B cell (primary cell): ENCODE measurements at regions of chr7 and their contacts with region 1.

Region 1: GRCh38 chr7:74206589-74207120 is 3.2 kb upstream of the LAT2 start:
- DNase-seq: peak; percentile 89
- ATAC-seq: peak; percentile 52
- H3K4me3 ChIP-seq: peak overlapping the region in 3 of 5 experiments; percentile 43 to 57 (median 46)
- H3K4me3 Mint-ChIP-seq: peak overlapping the region; percentile 74
- H3K27ac ChIP-seq: no peak overlapping the region
- H3K27ac Mint-ChIP-seq: no peak overlapping the region
- H3K4me1 ChIP-seq: peaks cover 27 to 48% of the 10 kb centered on the region in 2 donors
- H3K4me1 Mint-ChIP-seq: peaks cover 54% of the 10 kb centered on the region
- H3K27me3 ChIP-seq: no peaks in the 10 kb centered on the region
- H3K27me3 Mint-ChIP-seq: no peaks in the 10 kb centered on the region
- CTCF ChIP-seq: peak; percentile 98

Region 2: DNA sequence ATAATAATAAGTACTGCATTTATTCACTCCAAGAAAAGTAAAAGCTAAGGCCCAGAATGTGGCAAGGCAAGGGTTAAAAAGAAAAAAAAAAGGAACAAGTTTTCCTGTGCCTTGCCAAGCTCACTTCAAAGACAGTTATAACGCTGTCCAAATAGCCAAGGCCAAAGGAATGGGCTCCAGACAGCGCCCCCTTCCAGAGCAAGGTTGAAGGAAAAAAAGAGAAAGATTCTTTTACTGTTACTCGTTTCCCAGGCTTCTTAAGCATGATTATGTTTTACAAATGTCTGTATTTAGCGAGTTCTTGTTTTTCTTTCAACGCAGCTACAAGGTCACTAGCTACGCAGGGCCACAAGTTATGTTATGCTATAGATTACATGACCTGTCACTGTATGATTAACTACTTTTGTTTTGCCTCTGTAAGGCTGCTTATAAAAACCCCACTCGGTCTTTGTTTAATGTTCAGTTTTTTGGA is 41.6 kb before region 1 on chr7:
- CTCF ChIA-PET with region 1: no interaction called
- POLR2A ChIA-PET with region 1: no interaction called
- intact Hi-C with region 1: no loop called
- DNase-seq: no peak
- ATAC-seq: no peak
- H3K4me3 ChIP-seq: no peak overlapping the region
- H3K4me3 Mint-ChIP-seq: no peak overlapping the region
- H3K27ac ChIP-seq: no peak overlapping the region
- H3K27ac Mint-ChIP-seq: no peak overlapping the region
- H3K4me1 ChIP-seq: no peaks in the 10 kb centered on the region
- H3K4me1 Mint-ChIP-seq: no peaks in the 10 kb centered on the region
- H3K27me3 ChIP-seq: no peaks in the 10 kb centered on the region
- H3K27me3 Mint-ChIP-seq: no peaks in the 10 kb centered on the region
- CTCF ChIP-seq: no peak

Region 3: GRCh38 chr7:74191231-74191630 is 15.4 kb before region 1 on chr7:
- CTCF ChIA-PET with region 1: interaction called, 11 read pairs
- POLR2A ChIA-PET with region 1: no interaction called
- intact Hi-C with region 1: no loop called
- DNase-seq: no peak
- ATAC-seq: no peak
- H3K4me3 ChIP-seq: no peak overlapping the region
- H3K4me3 Mint-ChIP-seq: no peak overlapping the region
- H3K27ac ChIP-seq: no peak overlapping the region
- H3K27ac Mint-ChIP-seq: no peak overlapping the region
- H3K4me1 ChIP-seq: peaks cover under 1 to 6% of the 10 kb centered on the region in 2 donors
- H3K4me1 Mint-ChIP-seq: peaks cover 14% of the 10 kb centered on the region
- H3K27me3 ChIP-seq: no peaks in the 10 kb centered on the region
- H3K27me3 Mint-ChIP-seq: no peaks in the 10 kb centered on the region
- CTCF ChIP-seq: no peak

Region 4: DNA sequence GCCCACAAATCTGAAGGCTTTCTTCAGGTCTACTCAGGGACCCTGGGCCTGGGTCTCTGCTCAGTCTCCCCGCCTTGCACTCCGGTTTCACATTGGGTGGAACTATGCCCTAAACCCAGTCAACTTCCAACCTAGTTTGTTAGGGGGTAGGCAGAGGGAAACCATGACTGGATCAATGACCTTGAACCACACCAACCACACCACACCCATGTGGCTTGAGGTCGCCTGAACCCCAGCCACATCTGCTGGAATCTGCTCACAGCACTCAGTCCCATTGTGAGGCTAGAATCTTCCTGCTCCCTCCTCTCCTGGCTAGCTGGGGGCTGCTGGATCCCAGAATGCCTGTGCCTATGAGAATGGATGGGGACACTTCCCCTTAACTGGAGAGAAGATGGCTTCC is 29.6 kb after region 1 on chr7:
- CTCF ChIA-PET with region 1: interaction called, 55 read pairs
- POLR2A ChIA-PET with region 1: interaction called, 11 read pairs
- intact Hi-C with region 1: loop called (anchors 5 kb)
- DNase-seq: no peak
- ATAC-seq: no peak
- H3K4me3 ChIP-seq: no peak overlapping the region
- H3K4me3 Mint-ChIP-seq: no peak overlapping the region
- H3K27ac ChIP-seq: no peak overlapping the region
- H3K27ac Mint-ChIP-seq: peak overlapping the region; percentile 41
- H3K4me1 ChIP-seq: peaks cover 37 to 57% of the 10 kb centered on the region in 2 donors
- H3K4me1 Mint-ChIP-seq: peaks cover 37% of the 10 kb centered on the region
- H3K27me3 ChIP-seq: no peaks in the 10 kb centered on the region
- H3K27me3 Mint-ChIP-seq: no peaks in the 10 kb centered on the region
- CTCF ChIP-seq: no peak

Region 5: GRCh38 chr7:74262639-74263398 is 56.2 kb after region 1 on chr7:
- CTCF ChIA-PET with region 1: interaction called, 26 read pairs
- POLR2A ChIA-PET with region 1: interaction called, 3 read pairs
- intact Hi-C with region 1: no loop called
- DNase-seq: no peak
- ATAC-seq: no peak
- H3K4me3 ChIP-seq: no peak overlapping the region
- H3K4me3 Mint-ChIP-seq: no peak overlapping the region
- H3K27ac ChIP-seq: no peak overlapping the region
- H3K27ac Mint-ChIP-seq: peak overlapping the region; percentile 46
- H3K4me1 ChIP-seq: peaks cover 7 to 31% of the 10 kb centered on the region in 2 donors
- H3K4me1 Mint-ChIP-seq: peaks cover 27% of the 10 kb centered on the region
- H3K27me3 ChIP-seq: no peaks in the 10 kb centered on the region
- H3K27me3 Mint-ChIP-seq: no peaks in the 10 kb centered on the region
- CTCF ChIP-seq: no peak

Region 6: GRCh38 chr7:74365322-74366022 is 158.8 kb after region 1 on chr7:
- CTCF ChIA-PET with region 1: interaction called, 3 read pairs
- POLR2A ChIA-PET with region 1: interaction called, 10 read pairs
- intact Hi-C with region 1: no loop called
- DNase-seq: no peak
- ATAC-seq: no peak
- H3K4me3 ChIP-seq: no peak overlapping the region
- H3K4me3 Mint-ChIP-seq: no peak overlapping the region
- H3K27ac ChIP-seq: no peak overlapping the region
- H3K27ac Mint-ChIP-seq: no peak overlapping the region
- H3K4me1 ChIP-seq: peaks cover 0 to under 1% of the 10 kb centered on the region in 2 donors
- H3K4me1 Mint-ChIP-seq: peaks cover under 1% of the 10 kb centered on the region
- H3K27me3 ChIP-seq: no peaks in the 10 kb centered on the region
- H3K27me3 Mint-ChIP-seq: no peaks in the 10 kb centered on the region
- CTCF ChIP-seq: no peak